ENCODE measurements at regions of chr15 and their contacts with region 1.

Region 1: GRCh38 chr15:85330901-85331588 is 49.4 kb upstream of the AKAP13 start:
- DNase-seq: peak; percentile 98
- ATAC-seq: peak; percentile 84
- H3K4me3 Mint-ChIP-seq: peak overlapping the region; percentile 82
- H3K27ac Mint-ChIP-seq: peak overlapping the region; percentile 97
- H3K4me1 Mint-ChIP-seq: peaks cover 48% of the 10 kb centered on the region
- H3K27me3 Mint-ChIP-seq: no peaks in the 10 kb centered on the region

Region 2: GRCh38 chr15:85306946-85307708 is 23.9 kb before region 1 on chr15:
- CTCF ChIA-PET with region 1: interaction called, 146 read pairs
- DNase-seq: no peak
- ATAC-seq: no peak
- H3K4me3 Mint-ChIP-seq: no peak overlapping the region
- H3K27ac Mint-ChIP-seq: no peak overlapping the region
- H3K4me1 Mint-ChIP-seq: peaks cover 26% of the 10 kb centered on the region
- H3K27me3 Mint-ChIP-seq: no peaks in the 10 kb centered on the region

Region 3: DNA sequence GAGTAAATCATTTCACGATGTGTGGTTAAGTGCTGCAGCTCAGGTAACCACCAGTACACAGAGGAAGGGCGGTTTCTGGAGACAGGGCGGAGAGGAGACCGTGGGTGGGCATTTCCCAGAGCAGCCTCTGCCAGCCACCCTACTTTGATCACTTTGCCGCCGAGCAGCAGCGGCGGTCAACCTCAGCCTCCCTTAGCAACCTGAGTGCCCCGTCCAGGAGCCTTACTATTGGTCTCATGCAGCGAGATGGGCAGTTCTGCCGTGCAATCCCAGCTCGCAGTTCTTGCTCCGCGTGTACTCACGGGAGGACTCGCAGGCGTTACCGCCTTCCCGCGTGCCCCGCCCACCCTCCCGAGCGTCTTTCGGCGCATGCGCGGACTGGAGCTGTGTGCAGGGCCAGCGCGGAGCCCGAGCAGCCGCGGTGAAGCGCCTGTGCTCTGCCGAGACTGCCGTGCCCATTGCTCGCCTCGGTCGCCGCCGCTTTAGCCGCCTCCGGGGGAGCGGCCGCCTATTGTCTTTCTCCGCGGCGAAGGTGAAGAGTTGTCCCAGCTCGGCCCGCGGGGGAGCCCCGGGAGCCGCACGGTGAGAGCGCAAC is 49.3 kb after region 1 on chr15 and contains the start of gene AKAP13:
- CTCF ChIA-PET with region 1: interaction called, 39 read pairs
- DNase-seq: peak; percentile 99
- ATAC-seq: peak; percentile 86
- H3K4me3 Mint-ChIP-seq: peak within 1 kb of the TSS; percentile 78
- H3K27ac Mint-ChIP-seq: peak within 1 kb of the TSS; percentile 94
- H3K4me1 Mint-ChIP-seq: peaks cover 64% of the 10 kb centered on the region
- H3K27me3 Mint-ChIP-seq: peaks cover 2% of the 10 kb centered on the region
- total RNA-seq, gene AKAP13: 150 to 172 TPM

Region 4: GRCh38 chr15:85485956-85486567 is 155.0 kb after region 1 on chr15:
- CTCF ChIA-PET with region 1: interaction called, 14 read pairs
- DNase-seq: peak; percentile 68
- ATAC-seq: peak; percentile 85
- H3K4me3 Mint-ChIP-seq: no peak overlapping the region
- H3K27ac Mint-ChIP-seq: no peak overlapping the region
- H3K4me1 Mint-ChIP-seq: peaks cover 59% of the 10 kb centered on the region
- H3K27me3 Mint-ChIP-seq: no peaks in the 10 kb centered on the region

Measured in activated CD8-positive, alpha-beta memory T cell treated with anti-CD3 and anti-CD28 coated beads, Interleukin-2, amount 10 ng/mL, durations not matched to agents 7 days and 5 days (primary cell).